Vagina (tissue), 2 donors: ENCODE measurements at regions of chr2 and their contacts with region 1.

Region 1: GRCh38 chr2:104200533-104201168 is 653.3 kb upstream of the POU3F3 start:
- DNase-seq: no peak
- H3K4me3 ChIP-seq: no peak overlapping the region
- H3K27ac ChIP-seq: no peak overlapping the region
- H3K4me1 ChIP-seq: no peaks in the 10 kb centered on the region
- H3K27me3 ChIP-seq: no peaks in the 10 kb centered on the region
- CTCF ChIP-seq: no peak
- POLR2A ChIP-seq: no peak

Region 2: DNA sequence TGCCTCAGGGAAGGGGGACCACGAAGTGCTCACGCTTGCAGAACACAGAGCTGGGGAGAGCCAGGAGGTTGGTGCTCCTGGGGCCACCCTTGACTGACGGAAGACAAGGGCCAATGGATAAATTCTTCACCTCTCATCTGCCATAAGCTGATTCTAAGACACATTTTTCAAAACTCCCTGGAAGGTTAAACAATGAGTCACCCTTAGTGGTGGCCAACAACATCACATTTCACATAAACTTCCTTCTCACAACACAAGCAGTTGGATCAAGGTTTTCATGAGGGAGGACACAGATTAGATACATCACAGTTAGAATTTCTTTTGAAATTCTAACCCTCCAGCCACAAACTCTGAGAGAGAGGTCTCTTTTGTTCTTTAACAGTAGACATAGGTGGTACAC is 60.3 kb before region 1 on chr2:
- intact Hi-C with region 1: loop called (anchors 2 kb)
- DNase-seq: no peak
- H3K4me3 ChIP-seq: no peak overlapping the region
- H3K27ac ChIP-seq: no peak overlapping the region
- H3K4me1 ChIP-seq: no peaks in the 10 kb centered on the region
- H3K27me3 ChIP-seq: no peaks in the 10 kb centered on the region
- CTCF ChIP-seq: no peak
- POLR2A ChIP-seq: no peak

Region 3: GRCh38 chr2:104249629-104250028 is 49.0 kb after region 1 on chr2:
- intact Hi-C with region 1: no loop called
- DNase-seq: no peak
- H3K4me3 ChIP-seq: no peak overlapping the region
- H3K27ac ChIP-seq: no peak overlapping the region
- H3K4me1 ChIP-seq: no peaks in the 10 kb centered on the region
- H3K27me3 ChIP-seq: no peaks in the 10 kb centered on the region
- CTCF ChIP-seq: no peak
- POLR2A ChIP-seq: no peak